ENCODE measurements at regions of chr12 and their contacts with region 1.

Region 1: GRCh38 chr12:89162704-89163261 is 189.5 kb downstream of the DUSP6 start:
- DNase-seq: peak; percentile 86
- H3K4me3 Mint-ChIP-seq: no peak overlapping the region
- H3K27ac Mint-ChIP-seq: no peak overlapping the region
- H3K4me1 Mint-ChIP-seq: peaks cover 17% of the 10 kb centered on the region
- H3K27me3 Mint-ChIP-seq: no peaks in the 10 kb centered on the region

Region 2: GRCh38 chr12:88299567-88300101 is 863.1 kb before region 1 on chr12:
- intact Hi-C with region 1: loop called (anchors 5 kb)
- DNase-seq: peak; percentile 75
- H3K4me3 Mint-ChIP-seq: peak overlapping the region; percentile 52
- H3K27ac Mint-ChIP-seq: peak overlapping the region; percentile 87
- H3K4me1 Mint-ChIP-seq: peaks cover 26% of the 10 kb centered on the region
- H3K27me3 Mint-ChIP-seq: no peaks in the 10 kb centered on the region

Region 3: DNA sequence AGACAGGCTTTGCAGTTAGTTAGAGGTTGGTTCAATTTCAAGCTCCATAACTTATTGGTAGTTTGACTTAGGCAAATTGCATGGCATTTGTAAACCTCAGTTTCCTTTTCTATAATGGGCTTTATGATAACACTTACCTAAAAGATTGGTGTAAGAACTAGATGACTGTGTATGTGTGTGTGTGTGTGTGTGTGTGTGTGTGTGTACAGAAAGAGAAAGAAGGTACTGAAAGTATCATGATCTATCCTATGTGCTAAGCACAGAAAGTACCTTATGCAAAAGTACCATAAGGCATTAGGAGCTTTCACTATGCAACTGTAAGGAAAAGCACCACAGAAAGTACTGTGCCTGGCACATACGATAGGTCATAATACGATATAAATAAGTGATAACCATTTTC is 278.2 kb before region 1 on chr12:
- intact Hi-C with region 1: no loop called
- DNase-seq: no peak
- H3K4me3 Mint-ChIP-seq: no peak overlapping the region
- H3K27ac Mint-ChIP-seq: no peak overlapping the region
- H3K4me1 Mint-ChIP-seq: no peaks in the 10 kb centered on the region
- H3K27me3 Mint-ChIP-seq: no peaks in the 10 kb centered on the region

Region 4: DNA sequence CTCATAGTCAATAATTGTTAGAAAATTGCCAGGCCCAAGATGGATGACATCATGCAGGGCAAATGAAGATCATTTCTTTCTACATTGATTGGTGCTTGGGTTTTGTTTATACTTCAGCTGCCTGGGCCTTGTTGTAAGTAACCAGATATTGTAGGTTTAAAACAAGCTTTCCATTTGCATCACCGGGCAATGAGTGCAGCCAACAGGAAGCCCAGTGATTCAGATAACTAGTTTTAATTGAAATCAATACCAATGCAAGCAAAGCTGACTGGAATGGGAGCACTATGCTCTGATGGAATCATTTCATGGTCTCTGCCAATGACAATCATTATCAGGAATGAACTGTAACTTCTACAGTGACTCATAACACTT is 89.8 kb before region 1 on chr12:
- intact Hi-C with region 1: loop called (anchors 2 kb)
- DNase-seq: no peak
- H3K4me3 Mint-ChIP-seq: no peak overlapping the region
- H3K27ac Mint-ChIP-seq: peak overlapping the region; percentile 31
- H3K4me1 Mint-ChIP-seq: peaks cover 20% of the 10 kb centered on the region
- H3K27me3 Mint-ChIP-seq: no peaks in the 10 kb centered on the region

Region 5: DNA sequence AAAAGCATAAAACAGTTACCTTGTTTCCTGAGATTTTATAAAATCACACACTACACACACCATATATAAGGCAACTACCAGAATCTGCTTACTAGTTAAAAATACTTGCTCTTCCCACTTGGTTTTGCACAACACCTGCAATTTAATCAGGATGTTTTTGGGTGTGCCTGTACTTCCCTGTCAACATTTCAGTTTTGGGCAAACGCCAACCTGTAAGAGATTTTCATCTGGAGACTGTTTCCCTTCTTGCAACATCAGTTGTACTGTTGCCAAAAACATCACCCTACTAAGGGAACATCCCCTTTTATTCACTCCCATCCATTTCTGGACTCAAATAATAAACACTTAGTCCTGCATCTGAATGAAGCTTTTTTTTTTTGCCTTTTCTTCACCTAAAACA is 17.2 kb after region 1 on chr12:
- intact Hi-C with region 1: loop called (anchors 1 kb)
- DNase-seq: no peak
- H3K4me3 Mint-ChIP-seq: peak overlapping the region; percentile 38
- H3K27ac Mint-ChIP-seq: peak overlapping the region; percentile 81
- H3K4me1 Mint-ChIP-seq: peaks cover 51% of the 10 kb centered on the region
- H3K27me3 Mint-ChIP-seq: no peaks in the 10 kb centered on the region

Region 6: DNA sequence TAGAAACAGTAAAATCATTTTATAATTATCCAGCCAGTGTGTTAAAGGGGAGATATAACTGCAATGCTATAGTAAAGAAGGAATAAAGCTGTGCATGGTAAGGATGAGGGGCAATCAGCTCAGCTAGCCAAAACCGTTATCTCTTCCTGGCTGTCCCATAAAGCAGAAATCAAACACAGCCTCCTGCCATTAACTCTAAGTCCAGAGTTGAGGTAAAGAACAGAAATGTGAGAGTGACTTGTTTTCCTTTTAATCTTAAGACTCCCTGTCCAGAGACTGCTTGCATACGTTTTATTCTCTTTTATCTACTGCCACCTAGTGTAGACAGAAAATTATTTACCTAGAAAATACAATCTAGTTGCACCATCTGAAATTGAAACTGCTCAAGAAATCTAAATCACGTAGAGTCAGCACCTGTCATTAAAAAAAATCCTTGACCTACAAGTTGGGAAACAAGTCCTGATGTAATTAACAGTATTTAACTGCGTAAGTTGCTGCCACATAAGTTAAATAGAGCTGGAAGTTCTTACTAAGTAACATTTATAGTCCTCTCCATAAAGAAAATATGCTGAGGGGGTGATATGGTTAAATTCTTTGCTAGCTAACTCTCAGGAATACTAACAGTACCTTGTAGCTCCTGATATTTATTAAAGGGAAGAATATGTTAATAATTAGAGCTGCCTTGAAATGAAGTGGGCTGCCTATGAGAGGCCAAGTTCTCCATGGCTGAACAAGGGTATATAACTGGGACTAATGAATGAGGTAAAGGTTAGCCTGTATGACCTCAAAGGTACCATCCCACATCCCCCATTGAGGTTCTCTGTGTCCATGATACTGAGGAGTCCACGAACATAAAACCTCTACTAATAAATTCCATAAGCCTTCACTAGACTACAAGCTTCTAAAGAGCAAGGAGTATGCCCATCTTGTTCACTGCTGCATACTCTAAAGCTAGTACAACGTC is 299.1 kb after region 1 on chr12:
- intact Hi-C with region 1: loop called (anchors 1 kb)
- DNase-seq: peak; percentile 65
- H3K4me3 Mint-ChIP-seq: peak overlapping the region; percentile 77
- H3K27ac Mint-ChIP-seq: peak overlapping the region; percentile 64
- H3K4me1 Mint-ChIP-seq: peaks cover 39% of the 10 kb centered on the region
- H3K27me3 Mint-ChIP-seq: no peaks in the 10 kb centered on the region

Region 7: DNA sequence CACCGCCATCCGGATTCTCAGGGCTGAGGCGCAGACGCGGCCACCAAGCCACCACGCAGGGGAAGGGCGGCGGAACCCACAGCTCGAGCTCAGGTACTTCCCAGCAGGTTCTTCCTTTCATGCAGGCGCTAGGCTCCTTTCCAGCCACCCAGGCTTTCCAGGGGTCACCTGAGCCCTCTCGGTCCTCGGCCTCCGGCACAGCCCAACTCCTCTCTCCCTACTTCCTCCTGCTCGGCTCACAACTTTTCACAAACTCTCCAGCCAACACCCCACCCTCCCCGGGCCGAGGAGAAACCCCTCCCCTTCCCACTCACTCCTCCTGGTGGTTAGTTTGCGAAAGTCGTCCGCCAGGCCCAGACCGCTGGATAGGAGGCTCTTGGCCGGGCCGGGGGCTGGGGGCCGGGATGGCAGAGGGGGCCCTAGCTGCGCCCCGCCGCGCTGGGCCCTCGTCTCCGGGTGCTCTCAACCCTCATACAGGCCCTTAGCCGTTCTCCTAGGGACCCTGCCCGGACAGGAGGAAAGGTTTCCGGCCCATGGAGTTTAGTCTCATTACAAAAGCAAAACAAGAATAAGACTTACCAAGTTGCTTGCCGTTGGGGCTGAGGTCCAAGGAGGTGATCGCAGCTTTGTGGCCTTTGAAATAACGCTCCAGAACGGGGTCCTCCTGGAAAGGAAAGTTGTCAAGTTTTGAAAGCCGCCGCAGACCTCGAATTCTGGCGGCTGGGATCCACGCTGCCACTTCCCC is 361.9 kb after region 1 on chr12 and contains the start of gene GALNT4:
- intact Hi-C with region 1: loop called (anchors 2 kb)
- DNase-seq: peak; percentile 94
- H3K4me3 Mint-ChIP-seq: peak within 1 kb of the TSS; percentile 98
- H3K27ac Mint-ChIP-seq: peak within 1 kb of the TSS; percentile 99
- H3K4me1 Mint-ChIP-seq: peaks cover 49% of the 10 kb centered on the region
- H3K27me3 Mint-ChIP-seq: no peaks in the 10 kb centered on the region
- total RNA-seq, gene GALNT4: 6.9 and 7.6 TPM in 2 replicates